Activated naive CD4-positive, alpha-beta T cell treated with anti-CD3 and anti-CD28 coated beads for 36 hours (primary cell): ENCODE measurements at regions of chr16 and their contacts with region 1.

Region 1: GRCh38 chr16:57757326-57757786 is 21.8 kb downstream of the KATNB1 start:
- DNase-seq: peak; percentile 94
- H3K4me3 Mint-ChIP-seq: no peak overlapping the region
- H3K27ac Mint-ChIP-seq: no peak overlapping the region
- H3K4me1 Mint-ChIP-seq: no peaks in the 10 kb centered on the region
- H3K27me3 Mint-ChIP-seq: no peaks in the 10 kb centered on the region

Region 2: GRCh38 chr16:57802341-57803133 is 45.2 kb after region 1 on chr16 and contains the start of gene KIFC3:
- CTCF ChIA-PET with region 1: no interaction called
- intact Hi-C with region 1: loop called (anchors 2 kb)
- DNase-seq: peak; percentile 82
- H3K4me3 Mint-ChIP-seq: peak within 1 kb of the TSS; percentile 69
- H3K27ac Mint-ChIP-seq: no peak within 1 kb of the TSS
- H3K4me1 Mint-ChIP-seq: peaks cover 23% of the 10 kb centered on the region
- H3K27me3 Mint-ChIP-seq: peaks cover 33% of the 10 kb centered on the region
- total RNA-seq, gene KIFC3: 0.12 TPM in 1 of 2 experiments, not detected in the other

Region 3: GRCh38 chr16:57863434-57864160 is 106.2 kb after region 1 on chr16:
- CTCF ChIA-PET with region 1: interaction called, 4 read pairs
- intact Hi-C with region 1: loop called (anchors 1 kb)
- DNase-seq: peak; percentile 22
- H3K4me3 Mint-ChIP-seq: no peak overlapping the region
- H3K27ac Mint-ChIP-seq: no peak overlapping the region
- H3K4me1 Mint-ChIP-seq: no peaks in the 10 kb centered on the region
- H3K27me3 Mint-ChIP-seq: peaks cover 14% of the 10 kb centered on the region